AG04449 (cell line): ENCODE measurements at regions of chr11 and their contacts with region 1.

Region 1: DNA sequence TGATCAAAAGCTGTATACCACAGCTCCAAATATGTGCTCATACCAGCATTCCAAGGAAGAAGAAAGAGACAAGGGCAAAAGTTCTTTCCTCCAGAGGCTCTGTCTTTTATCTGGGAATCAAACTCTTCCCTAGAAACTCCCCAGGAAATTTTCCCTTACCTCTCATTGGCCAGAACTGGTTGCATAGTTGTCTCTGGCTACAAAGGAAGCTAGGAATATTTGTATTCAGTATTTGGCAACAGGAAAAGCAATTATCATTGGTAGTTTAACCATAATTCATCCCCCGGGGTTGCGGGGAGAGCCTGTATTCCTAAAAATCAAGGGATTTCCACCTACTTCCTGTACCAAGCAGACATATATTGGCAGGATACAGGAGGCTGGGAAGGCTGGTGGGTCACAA is 10.5 kb upstream of the ZFTA start:
- DNase-seq: no peak
- H3K4me3 ChIP-seq: no peak overlapping the region
- CTCF ChIP-seq: no peak

Region 2: GRCh38 chr11:63614136-63614664 is 164.8 kb before region 1 on chr11 and contains the start of gene PLAAT3:
- CTCF ChIA-PET with region 1: no interaction called
- POLR2A ChIA-PET with region 1: no interaction called
- DNase-seq: no peak
- H3K4me3 ChIP-seq: peak within 1 kb of the TSS; percentile 61
- CTCF ChIP-seq: no peak

Region 3: GRCh38 chr11:63768237-63769043 is 10.6 kb before region 1 on chr11 and contains the start of gene ZFTA:
- CTCF ChIA-PET with region 1: interaction called, 18 read pairs
- POLR2A ChIA-PET with region 1: no interaction called
- DNase-seq: no peak
- H3K4me3 ChIP-seq: peak within 1 kb of the TSS; percentile 70
- CTCF ChIP-seq: peak; percentile 57

Region 4: DNA sequence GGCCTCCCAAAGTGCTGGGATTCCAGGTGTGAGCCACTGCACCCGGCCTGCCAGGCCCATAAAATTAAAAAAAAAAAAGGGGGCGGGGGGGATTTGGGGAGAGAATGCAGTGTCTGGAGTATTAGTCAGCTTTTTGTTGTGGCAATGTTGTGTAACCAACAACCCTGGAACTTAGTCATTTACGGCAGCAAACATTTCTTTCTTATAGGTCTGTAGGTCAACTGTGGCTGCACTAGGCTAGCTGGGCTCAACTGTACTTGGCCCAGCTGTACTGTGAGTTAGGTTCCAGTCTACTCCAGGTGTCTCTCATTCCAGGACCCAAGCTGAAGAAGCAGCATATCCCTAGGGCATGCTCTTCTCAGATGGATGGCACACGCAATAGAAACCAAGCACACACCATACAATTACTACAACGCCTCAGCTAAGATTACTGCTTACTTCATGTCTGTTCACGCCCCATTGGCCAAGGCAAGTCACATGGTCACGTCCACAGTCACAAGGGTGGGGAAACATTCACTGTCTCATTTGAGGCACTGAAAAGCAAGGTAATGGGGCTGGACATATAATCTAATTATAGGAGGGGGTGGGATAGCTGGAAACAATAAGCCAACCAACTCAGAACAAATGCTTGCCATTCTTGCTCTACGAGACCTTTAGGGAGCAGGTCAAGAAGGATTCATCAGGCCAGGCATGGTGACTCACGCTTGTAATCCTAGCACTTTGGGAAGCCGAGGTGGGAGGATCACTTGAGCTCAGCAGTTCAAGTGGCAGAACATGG is 23.8 kb after region 1 on chr11:
- CTCF ChIA-PET with region 1: no interaction called
- POLR2A ChIA-PET with region 1: no interaction called
- DNase-seq: no peak
- H3K4me3 ChIP-seq: no peak overlapping the region
- CTCF ChIP-seq: no peak